Head of caudate nucleus (tissue), 42 donors: ENCODE measurements at regions of chr5 and their contacts with region 1.

Region 1: GRCh38 chr5:145811834-145812625 is 23.1 kb downstream of the PRELID2 start:
- DNase-seq: peak in 17 of 42 donors; percentile 11 to 65 (median 35)

Region 2: DNA sequence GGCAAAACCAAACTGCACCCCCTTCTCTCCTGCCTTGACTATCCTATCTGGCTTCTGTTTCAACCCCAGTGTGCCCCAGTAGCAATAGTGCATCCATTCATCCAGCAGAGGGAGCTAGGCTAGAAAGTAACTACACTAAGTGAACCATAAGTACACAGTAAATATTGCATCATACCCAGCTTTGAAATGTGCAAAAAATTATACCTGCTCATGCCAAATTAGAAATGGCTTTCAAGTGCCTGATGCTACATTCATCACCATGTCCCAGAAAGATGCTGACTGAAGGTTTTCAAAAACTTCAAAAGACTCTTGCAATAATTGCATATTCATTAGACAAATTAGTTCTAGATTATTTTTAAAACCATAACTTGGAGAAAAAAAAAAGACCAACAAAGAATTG is 130.3 kb before region 1 on chr5:
- intact Hi-C with region 1: loop called (anchors 10 kb)
- DNase-seq: peak in 37 of 42 donors; percentile 12 to 84 (median 54)

Region 3: DNA sequence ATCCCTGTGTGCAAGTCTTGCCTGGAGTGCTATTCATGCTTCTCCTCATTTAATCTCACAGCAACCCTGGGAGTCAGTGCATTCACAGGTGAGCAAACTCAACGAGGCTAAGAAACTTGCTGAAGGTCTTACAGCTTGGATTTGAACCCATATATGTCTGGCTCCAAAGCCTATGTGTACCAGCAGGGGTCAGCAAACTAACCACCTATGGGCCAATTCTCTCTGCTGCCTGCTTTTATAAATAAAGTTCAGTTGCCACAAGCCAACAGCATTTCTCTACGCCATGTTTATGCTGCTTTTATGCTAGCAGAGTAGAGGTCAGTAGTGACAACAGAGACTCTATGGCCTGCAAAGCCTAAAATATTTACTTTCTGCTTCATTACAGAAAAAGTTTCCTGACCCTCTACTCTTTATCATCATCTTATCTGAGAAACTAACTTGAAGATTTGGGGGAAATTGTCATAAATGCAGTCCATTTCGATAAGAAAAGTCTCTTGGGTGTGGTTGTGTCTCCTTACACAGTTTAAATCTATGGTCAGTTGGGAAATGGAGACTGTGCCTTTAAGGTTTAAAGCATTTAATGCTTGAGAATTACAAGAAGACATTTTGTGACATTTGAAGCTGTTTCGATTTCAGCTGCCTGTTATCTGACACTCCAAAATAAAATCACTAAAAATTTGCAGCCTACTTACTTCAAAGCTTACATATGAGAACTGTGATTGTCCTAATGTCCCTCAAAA is 114.6 kb before region 1 on chr5:
- intact Hi-C with region 1: no loop called
- DNase-seq: no peak

Region 4: DNA sequence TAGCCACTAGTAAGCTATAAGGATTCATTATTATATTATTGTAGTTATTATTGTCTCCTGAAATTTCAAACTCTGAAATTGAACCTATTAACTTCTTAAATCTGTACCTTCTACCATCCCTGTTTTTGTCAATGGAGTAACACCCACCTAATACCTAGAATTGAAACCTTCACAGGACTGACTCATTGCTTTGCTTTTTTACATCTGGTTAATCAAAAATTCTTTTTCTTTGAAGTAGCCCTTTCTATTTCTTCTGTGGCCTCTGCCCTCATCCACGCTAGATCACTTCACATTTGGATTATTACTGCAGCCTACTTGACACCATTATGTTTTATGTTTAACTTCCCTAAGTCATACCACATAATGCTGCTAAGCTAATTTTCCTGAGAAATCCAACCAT is 426.9 kb after region 1 on chr5:
- intact Hi-C with region 1: no loop called
- DNase-seq: no peak